BJ (cell line): ENCODE measurements at regions of chr7 and their contacts with region 1.

Region 1: GRCh38 chr7:48109848-48110663 is 21.0 kb downstream of the UPP1 start:
- DNase-seq: no peak
- H3K4me3 ChIP-seq: no peak overlapping the region
- H3K27me3 ChIP-seq: no peaks in the 10 kb centered on the region
- CTCF ChIP-seq: peak; percentile 99

Region 2: GRCh38 chr7:47979145-47979831 is 130.8 kb before region 1 on chr7 and contains the start of gene HUS1:
- CTCF ChIA-PET with region 1: interaction called, 16 read pairs
- POLR2A ChIA-PET with region 1: no interaction called
- DNase-seq: peak; percentile 33
- H3K4me3 ChIP-seq: peak within 1 kb of the TSS; percentile 74
- H3K27me3 ChIP-seq: no peaks in the 10 kb centered on the region
- CTCF ChIP-seq: no peak
- polyA plus RNA-seq, gene HUS1: 14.1 and 23.7 TPM in 2 replicates

Region 3: GRCh38 chr7:47999418-47999817 is 110.6 kb before region 1 on chr7:
- CTCF ChIA-PET with region 1: interaction called, 14 read pairs
- POLR2A ChIA-PET with region 1: no interaction called
- DNase-seq: no peak
- H3K4me3 ChIP-seq: no peak overlapping the region
- H3K27me3 ChIP-seq: no peaks in the 10 kb centered on the region
- CTCF ChIP-seq: no peak

Region 4: DNA sequence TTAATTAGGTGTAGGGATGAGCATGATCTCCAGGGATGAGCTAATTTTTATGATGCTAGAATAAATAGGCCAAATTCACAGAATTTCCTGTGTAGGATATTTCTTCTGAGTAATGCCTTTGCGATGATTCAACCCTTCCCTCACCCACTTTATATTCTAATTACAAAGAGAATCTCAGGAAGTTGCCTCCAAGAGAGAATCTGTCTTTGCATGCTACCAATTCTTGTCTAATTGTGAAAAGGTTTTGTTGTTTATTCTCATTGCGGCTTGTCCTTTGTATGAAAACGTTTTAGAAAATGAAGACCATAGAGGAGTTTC is 68.4 kb before region 1 on chr7:
- CTCF ChIA-PET with region 1: interaction called, 11 read pairs
- POLR2A ChIA-PET with region 1: no interaction called
- DNase-seq: peak; percentile 59
- H3K4me3 ChIP-seq: no peak overlapping the region
- H3K27me3 ChIP-seq: peaks cover 3% of the 10 kb centered on the region
- CTCF ChIP-seq: no peak

Region 5: DNA sequence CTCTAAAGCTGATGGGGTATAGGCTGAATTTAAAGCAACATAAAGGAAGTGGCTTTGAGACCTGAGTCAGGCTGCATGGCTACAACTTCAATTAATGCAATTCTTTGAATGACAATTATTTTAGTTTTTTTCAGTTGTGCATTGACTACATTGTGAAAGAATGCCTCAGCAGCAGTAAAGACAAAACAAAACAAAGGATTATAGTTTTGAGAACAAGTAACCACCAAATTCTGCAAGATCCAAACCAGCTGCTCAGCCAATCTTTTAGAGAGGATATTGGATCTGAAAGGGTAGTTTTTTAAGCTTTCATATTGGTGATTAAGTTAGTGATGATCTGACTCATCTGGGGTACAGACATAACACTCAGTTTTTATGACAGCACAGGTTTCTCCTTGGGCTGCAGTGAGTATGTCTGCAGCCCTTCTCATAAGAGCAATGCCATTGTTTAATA is 20.6 kb after region 1 on chr7:
- CTCF ChIA-PET with region 1: interaction called, 17 read pairs
- POLR2A ChIA-PET with region 1: no interaction called
- DNase-seq: peak; percentile 31
- H3K4me3 ChIP-seq: no peak overlapping the region
- H3K27me3 ChIP-seq: no peaks in the 10 kb centered on the region
- CTCF ChIP-seq: no peak

Region 6: GRCh38 chr7:48637382-48637781 is 527.3 kb after region 1 on chr7:
- CTCF ChIA-PET with region 1: no interaction called
- POLR2A ChIA-PET with region 1: no interaction called
- DNase-seq: no peak
- H3K4me3 ChIP-seq: no peak overlapping the region
- H3K27me3 ChIP-seq: no peaks in the 10 kb centered on the region
- CTCF ChIP-seq: no peak